ENCODE measurements at regions of chr17 and their contacts with region 1.

Region 1: GRCh38 chr17:34361478-34362061 is 1.5 kb downstream of the CCL1 start:
- DNase-seq: peak; percentile 92
- H3K4me3 ChIP-seq: no peak overlapping the region
- H3K27ac ChIP-seq: no peak overlapping the region
- H3K4me1 ChIP-seq: no peaks in the 10 kb centered on the region
- H3K27me3 ChIP-seq: no peaks in the 10 kb centered on the region
- CTCF ChIP-seq: peak; percentile 97

Region 2: DNA sequence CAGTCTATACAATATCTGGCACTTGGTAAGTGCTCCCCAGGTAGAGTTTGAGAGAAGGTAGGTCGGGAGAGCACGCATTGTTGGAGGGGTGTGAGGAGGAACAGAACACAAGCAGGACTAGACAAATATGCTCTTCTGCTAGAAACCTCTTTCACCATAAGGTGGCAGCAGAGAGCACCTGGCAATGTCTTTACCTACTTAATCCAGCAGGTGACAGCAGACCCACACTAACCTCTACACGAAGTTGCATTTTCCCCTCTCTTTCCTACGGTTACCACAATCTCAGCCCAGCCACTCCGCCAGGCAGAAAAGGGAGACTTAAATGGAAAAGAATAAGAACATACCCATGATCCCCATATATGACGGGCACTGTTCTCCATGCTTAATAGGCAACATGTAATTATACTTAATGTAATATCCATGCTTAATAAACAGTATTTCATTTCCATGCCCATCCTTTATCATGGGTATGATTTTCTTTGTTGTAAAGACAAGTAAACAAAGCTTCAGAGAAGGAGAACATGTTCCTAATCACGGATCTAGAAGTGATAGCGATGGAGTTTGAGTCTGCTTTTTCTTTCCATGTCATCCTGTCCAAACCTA is 161.5 kb before region 1 on chr17:
- intact Hi-C with region 1: loop called (anchors 1 kb)
- DNase-seq: peak; percentile 78
- H3K4me3 ChIP-seq: no peak overlapping the region
- H3K27ac ChIP-seq: no peak overlapping the region
- H3K4me1 ChIP-seq: no peaks in the 10 kb centered on the region
- H3K27me3 ChIP-seq: no peaks in the 10 kb centered on the region
- CTCF ChIP-seq: peak; percentile 99

Region 3: GRCh38 chr17:34841468-34841867 is 479.9 kb after region 1 on chr17:
- intact Hi-C with region 1: no loop called
- DNase-seq: no peak
- H3K4me3 ChIP-seq: no peak overlapping the region
- H3K27ac ChIP-seq: no peak overlapping the region
- H3K4me1 ChIP-seq: no peaks in the 10 kb centered on the region
- H3K27me3 ChIP-seq: no peaks in the 10 kb centered on the region
- CTCF ChIP-seq: no peak